K562 (cell line): ENCODE measurements at regions of chr7 and their contacts with region 1.

Region 1: DNA sequence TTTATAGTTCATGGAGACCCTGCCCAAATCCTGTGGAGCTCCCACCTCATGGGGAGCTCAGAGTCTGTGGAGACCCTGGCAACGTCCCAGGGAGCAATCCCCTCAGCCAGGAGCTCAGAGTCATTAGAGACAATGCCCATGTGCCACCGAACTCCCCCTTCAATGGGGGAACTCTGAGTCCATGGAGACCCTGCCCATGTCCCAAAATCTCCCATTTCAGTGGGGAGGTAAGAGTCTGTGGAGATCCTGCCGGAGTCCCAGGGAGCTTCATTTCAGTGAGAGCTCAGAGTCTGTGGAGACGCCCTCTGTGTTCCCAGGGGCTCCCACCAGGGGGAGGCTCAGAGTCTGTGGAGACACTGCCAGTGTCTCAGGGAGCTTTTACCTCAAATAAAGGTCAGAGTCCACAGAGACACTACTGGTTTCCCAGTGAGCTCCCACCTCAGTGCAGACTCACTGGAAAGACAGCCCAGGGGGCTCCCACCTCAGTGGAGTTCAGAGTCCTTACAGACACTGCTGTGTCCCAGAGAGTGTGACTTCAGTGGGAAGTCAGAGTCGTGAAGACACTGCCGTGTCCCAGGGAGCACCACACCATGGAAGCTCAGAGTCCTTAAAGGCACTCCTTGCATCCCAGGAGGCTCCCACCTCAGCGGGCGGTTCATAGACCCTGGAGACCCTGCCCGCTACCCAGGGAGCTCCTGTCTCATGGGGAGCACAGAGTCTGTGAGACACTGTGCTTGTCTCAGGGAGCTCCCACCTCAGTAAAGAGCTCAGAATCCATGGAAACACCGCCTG is 5.0 kb downstream of the MYO1G start:
- DNase-seq: peak; percentile 65 to 85 (median 74)
- ATAC-seq: peak; percentile 94
- H3K4me3 ChIP-seq: no peak overlapping the region
- H3K27ac ChIP-seq: no peak overlapping the region; the same call in 2 of the 3 replicates
- H3K4me1 ChIP-seq: peaks cover 21 to 55% of the 10 kb centered on the region in 2 experiments; a peak in 4 of 5 replicates
- H3K27me3 ChIP-seq: no peaks in the 10 kb centered on the region
- CTCF ChIP-seq: peak; percentile 85 to 96 (median 94)
- EP300 ChIP-seq: no peak
- POLR2A ChIP-seq: no peak
- RAD21 ChIP-seq: peak; percentile 85 to 93

Region 2: GRCh38 chr7:44291066-44291732 is 682.6 kb before region 1 on chr7:
- CTCF ChIA-PET with region 1: no interaction called
- POLR2A ChIA-PET with region 1: no interaction called
- in situ Hi-C with region 1: no loop called
- intact Hi-C with region 1: no loop called
- DNase-seq: peak in 2 of 4 experiments; percentile 56 to 70
- ATAC-seq: peak; percentile 78
- H3K4me3 ChIP-seq: no peak overlapping the region
- H3K27ac ChIP-seq: no peak overlapping the region
- H3K4me1 ChIP-seq: peaks cover 14 to 20% of the 10 kb centered on the region in 2 experiments
- H3K27me3 ChIP-seq: peaks cover 43 to 89% of the 10 kb centered on the region in 2 experiments
- CTCF ChIP-seq: no peak
- EP300 ChIP-seq: 0 out of 2 replicates have a peak, but pooled peaks have one; percentile 14
- POLR2A ChIP-seq: no peak
- RAD21 ChIP-seq: peak in 1 of 2 experiments; percentile 16; a peak in 1 of 4 replicates

Region 3: DNA sequence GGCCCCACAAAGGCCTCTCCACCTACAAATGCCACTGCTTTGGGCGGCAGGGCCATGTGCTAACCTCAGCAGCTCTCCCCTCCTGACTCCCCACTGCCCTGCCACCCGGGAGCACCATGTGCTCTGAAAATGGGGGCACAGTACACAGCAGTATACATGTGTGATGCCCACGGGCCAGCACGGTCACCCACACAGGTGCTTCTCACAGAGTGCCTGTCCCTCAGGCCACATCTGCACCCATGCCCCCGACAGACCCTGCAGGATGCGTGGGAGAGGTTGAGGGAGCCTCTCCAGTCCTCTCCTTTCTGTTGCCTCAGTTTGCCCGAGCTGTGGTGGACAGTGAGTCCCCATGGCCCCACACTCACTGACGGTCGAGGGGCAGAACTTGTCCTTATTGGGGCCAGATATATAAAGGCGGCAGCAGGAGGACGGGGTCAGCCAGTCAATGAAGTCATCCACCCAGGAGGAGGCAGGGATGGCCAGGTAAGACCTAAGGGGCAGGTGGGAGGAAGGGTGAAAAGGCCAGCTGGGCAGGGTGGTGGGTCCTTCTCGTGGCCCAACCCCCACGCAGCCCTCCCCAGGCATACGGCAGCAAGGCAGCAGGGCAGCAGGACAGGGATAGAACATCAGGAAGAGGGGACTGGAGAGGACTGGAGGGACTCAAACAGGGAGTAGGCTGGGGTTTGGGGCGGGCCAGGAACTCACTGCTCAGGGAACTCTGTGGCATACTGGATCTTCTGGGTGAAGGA is 452.3 kb before region 1 on chr7:
- CTCF ChIA-PET with region 1: no interaction called
- POLR2A ChIA-PET with region 1: no interaction called
- in situ Hi-C with region 1: no loop called
- intact Hi-C with region 1: no loop called
- DNase-seq: no peak
- ATAC-seq: no peak; the same call in 2 of the 3 replicates
- H3K4me3 ChIP-seq: no peak overlapping the region
- H3K27ac ChIP-seq: no peak overlapping the region
- H3K4me1 ChIP-seq: peaks cover 0 to 6% of the 10 kb centered on the region in 2 experiments; a peak in 2 of 5 replicates
- H3K27me3 ChIP-seq: peaks cover 6 to 38% of the 10 kb centered on the region in 2 experiments; a peak in 4 of 5 replicates
- CTCF ChIP-seq: no peak
- EP300 ChIP-seq: no peak
- POLR2A ChIP-seq: no peak
- RAD21 ChIP-seq: no peak

Region 4: GRCh38 chr7:44955733-44956132 is 18.1 kb before region 1 on chr7:
- CTCF ChIA-PET with region 1: no interaction called
- POLR2A ChIA-PET with region 1: interaction called, 11 read pairs
- in situ Hi-C with region 1: no loop called
- intact Hi-C with region 1: no loop called
- DNase-seq: peak in 3 of 4 experiments; percentile 37 to 88 (median 80)
- ATAC-seq: peak; percentile 75
- H3K4me3 ChIP-seq: no peak overlapping the region
- H3K27ac ChIP-seq: peak overlapping the region; percentile 63
- H3K4me1 ChIP-seq: peaks cover 18 to 39% of the 10 kb centered on the region in 2 experiments
- H3K27me3 ChIP-seq: no peaks in the 10 kb centered on the region
- CTCF ChIP-seq: peak in 2 of 3 experiments; percentile 21 to 32; a peak in 1 of 6 replicates
- EP300 ChIP-seq: peak; percentile 51; the same call in 1 of the 2 replicates
- POLR2A ChIP-seq: no peak
- RAD21 ChIP-seq: peak in 1 of 2 experiments; percentile 54; a peak in 2 of 4 replicates

Region 5: DNA sequence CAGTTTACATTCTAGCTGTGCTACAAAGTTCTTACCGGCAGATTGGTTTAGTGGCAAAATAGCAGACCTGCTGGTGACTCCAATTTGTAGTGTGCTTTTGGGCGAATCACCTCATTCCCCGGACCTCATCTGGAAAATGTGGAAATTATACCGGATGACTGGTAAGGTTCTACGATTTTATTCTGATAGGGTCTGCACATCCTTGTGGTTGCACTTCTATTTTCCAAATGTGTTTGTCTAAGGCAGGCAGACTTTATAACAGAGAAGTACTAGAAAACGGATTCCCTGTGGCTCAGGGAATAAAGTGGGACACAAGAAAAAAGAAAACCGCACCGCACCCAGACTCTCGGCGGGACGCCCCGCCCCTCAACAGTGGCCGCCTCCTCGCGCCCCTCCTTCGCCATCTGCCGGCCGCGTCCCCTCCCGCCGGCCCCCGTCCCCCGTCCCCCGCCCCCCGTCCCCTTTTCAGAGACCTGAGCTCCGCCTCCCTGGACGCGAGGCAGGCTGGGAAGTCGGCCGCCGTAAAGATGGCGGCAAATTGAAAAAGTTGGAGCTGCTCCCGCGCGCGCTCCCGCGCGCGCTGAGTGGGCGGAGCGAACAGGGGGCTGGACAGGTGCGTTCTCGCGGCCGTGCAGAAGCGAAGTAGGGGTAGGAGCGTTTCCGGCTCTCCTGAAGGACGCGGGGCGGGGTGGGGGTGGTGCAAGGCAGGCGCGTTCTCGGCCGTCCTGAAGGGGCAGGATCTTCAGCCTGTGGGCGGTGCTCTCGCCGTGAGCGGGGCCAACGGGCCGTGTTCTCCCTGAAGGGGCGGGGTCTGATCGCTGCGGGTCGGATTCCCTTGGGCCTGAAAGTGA is 25.7 kb after region 1 on chr7:
- CTCF ChIA-PET with region 1: no interaction called
- POLR2A ChIA-PET with region 1: interaction called, 14 read pairs
- in situ Hi-C with region 1: no loop called
- intact Hi-C with region 1: no loop called
- DNase-seq: peak; percentile 88 to 99 (median 92)
- ATAC-seq: peak; percentile 91
- H3K4me3 ChIP-seq: peak overlapping the region; percentile 69
- H3K27ac ChIP-seq: peak overlapping the region; percentile 97
- H3K4me1 ChIP-seq: peaks cover 22 to 39% of the 10 kb centered on the region in 2 experiments
- H3K27me3 ChIP-seq: no peaks in the 10 kb centered on the region
- CTCF ChIP-seq: no peak
- EP300 ChIP-seq: peak; percentile 10; the same call in 1 of the 2 replicates
- POLR2A ChIP-seq: peak; percentile 87
- RAD21 ChIP-seq: no peak

Region 6: GRCh38 chr7:45089341-45089891 is 115.6 kb after region 1 on chr7:
- CTCF ChIA-PET with region 1: no interaction called
- POLR2A ChIA-PET with region 1: no interaction called
- in situ Hi-C with region 1: no loop called
- intact Hi-C with region 1: no loop called
- DNase-seq: peak; percentile 80 to 90 (median 88)
- ATAC-seq: peak; percentile 74
- H3K4me3 ChIP-seq: peak overlapping the region; percentile 25; the same call in 1 of the 2 replicates
- H3K27ac ChIP-seq: no peak overlapping the region
- H3K4me1 ChIP-seq: peaks cover 2 to 38% of the 10 kb centered on the region in 2 experiments; a peak in 3 of 5 replicates
- H3K27me3 ChIP-seq: no peaks in the 10 kb centered on the region; a peak in 1 of 5 replicates
- CTCF ChIP-seq: no peak
- EP300 ChIP-seq: no peak
- POLR2A ChIP-seq: no peak
- RAD21 ChIP-seq: no peak

Region 7: GRCh38 chr7:45111298-45112223 is 137.8 kb after region 1 on chr7 and contains the start of gene TBRG4:
- CTCF ChIA-PET with region 1: no interaction called
- POLR2A ChIA-PET with region 1: interaction called, 12 read pairs
- in situ Hi-C with region 1: no loop called
- intact Hi-C with region 1: no loop called
- DNase-seq: peak; percentile 89 to 98 (median 91)
- ATAC-seq: peak; percentile 91
- H3K4me3 ChIP-seq: peak within 1 kb of the TSS; percentile 95
- H3K27ac ChIP-seq: peak within 1 kb of the TSS; percentile 99
- H3K4me1 ChIP-seq: peaks cover 12 to 24% of the 10 kb centered on the region in 2 experiments; a peak in 4 of 5 replicates
- H3K27me3 ChIP-seq: no peaks in the 10 kb centered on the region
- CTCF ChIP-seq: peak; percentile 57 to 73 (median 68)
- EP300 ChIP-seq: no peak; the same call in 1 of the 2 replicates
- POLR2A ChIP-seq: peak; percentile 99
- RAD21 ChIP-seq: peak in 1 of 2 experiments; percentile 17; a peak in 2 of 4 replicates
- polyA plus RNA-seq, gene TBRG4: 11.2 to 34.9 TPM

Region 8: DNA sequence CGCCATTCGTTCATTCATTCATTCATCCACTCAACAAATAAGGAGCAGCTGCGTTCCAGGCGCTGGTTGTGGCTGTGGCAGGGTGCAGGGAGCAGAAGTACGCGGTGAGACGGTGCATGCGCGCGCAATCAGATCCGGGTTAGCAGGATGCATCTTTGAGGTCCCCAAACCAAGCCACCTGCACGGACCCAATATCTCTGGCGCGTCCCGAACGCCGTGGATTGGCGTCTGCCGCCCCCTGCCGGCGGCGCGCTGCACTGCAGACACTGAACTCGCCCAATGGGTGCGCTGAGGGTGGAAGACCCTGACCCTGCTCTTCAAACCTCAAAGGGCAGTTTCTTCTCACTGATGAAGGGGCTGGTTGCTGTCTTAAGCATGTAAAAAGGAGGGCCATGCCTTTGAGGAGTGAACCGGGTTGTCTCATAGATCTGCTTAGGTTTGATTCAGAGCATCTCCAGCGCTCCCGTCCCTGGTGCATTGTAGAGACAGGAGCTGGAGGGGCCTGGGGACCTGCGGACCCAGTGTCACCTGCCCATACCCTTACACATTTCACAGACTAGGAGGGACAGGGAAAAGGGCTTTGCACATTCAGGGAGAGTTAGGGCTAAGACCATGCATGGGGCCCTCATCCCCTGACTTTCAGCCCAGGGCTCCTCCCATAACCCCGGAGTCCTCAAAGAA is 286.3 kb after region 1 on chr7:
- CTCF ChIA-PET with region 1: no interaction called
- POLR2A ChIA-PET with region 1: no interaction called
- in situ Hi-C with region 1: no loop called
- intact Hi-C with region 1: loop called (anchors 5 kb)
- DNase-seq: peak; percentile 70 to 81 (median 76)
- ATAC-seq: peak; percentile 98
- H3K4me3 ChIP-seq: no peak overlapping the region
- H3K27ac ChIP-seq: no peak overlapping the region
- H3K4me1 ChIP-seq: peaks cover 0 to 8% of the 10 kb centered on the region in 2 experiments; a peak in 2 of 5 replicates
- H3K27me3 ChIP-seq: peaks cover 0 to 37% of the 10 kb centered on the region in 2 experiments; a peak in 4 of 5 replicates
- CTCF ChIP-seq: peak; percentile 93 to 98 (median 95)
- EP300 ChIP-seq: no peak
- POLR2A ChIP-seq: no peak
- RAD21 ChIP-seq: peak; percentile 95 to 96